CD4-positive, alpha-beta T cell (primary cell): ENCODE measurements at regions of chr4 and their contacts with region 1.

Region 1: GRCh38 chr4:85720735-85721134 is 245.8 kb downstream of the ARHGAP24 start:
- DNase-seq: no peak
- ATAC-seq: no peak
- H3K4me3 ChIP-seq: no peak overlapping the region
- H3K4me3 Mint-ChIP-seq: no peak overlapping the region
- H3K27ac ChIP-seq: no peak overlapping the region
- H3K27ac Mint-ChIP-seq: no peak overlapping the region
- H3K4me1 ChIP-seq: no peaks in the 10 kb centered on the region
- H3K4me1 Mint-ChIP-seq: no peaks in the 10 kb centered on the region
- H3K27me3 ChIP-seq: no peaks in the 10 kb centered on the region
- H3K27me3 Mint-ChIP-seq: no peaks in the 10 kb centered on the region
- CTCF ChIP-seq: no peak

Region 2: GRCh38 chr4:85672116-85672515 is 48.6 kb before region 1 on chr4:
- CTCF ChIA-PET with region 1: no interaction called
- POLR2A ChIA-PET with region 1: no interaction called
- intact Hi-C with region 1: loop called in 1 of 2 experiments (anchors 2 kb)
- DNase-seq: no peak
- ATAC-seq: no peak
- H3K4me3 ChIP-seq: no peak overlapping the region
- H3K4me3 Mint-ChIP-seq: no peak overlapping the region
- H3K27ac ChIP-seq: no peak overlapping the region
- H3K27ac Mint-ChIP-seq: no peak overlapping the region
- H3K4me1 ChIP-seq: no peaks in the 10 kb centered on the region
- H3K4me1 Mint-ChIP-seq: no peaks in the 10 kb centered on the region
- H3K27me3 ChIP-seq: no peaks in the 10 kb centered on the region
- H3K27me3 Mint-ChIP-seq: no peaks in the 10 kb centered on the region
- CTCF ChIP-seq: no peak

Region 3: GRCh38 chr4:86279293-86279960 is 558.7 kb after region 1 on chr4:
- CTCF ChIA-PET with region 1: no interaction called
- POLR2A ChIA-PET with region 1: no interaction called
- intact Hi-C with region 1: no loop called
- DNase-seq: no peak
- ATAC-seq: no peak
- H3K4me3 ChIP-seq: no peak overlapping the region
- H3K4me3 Mint-ChIP-seq: no peak overlapping the region
- H3K27ac ChIP-seq: no peak overlapping the region
- H3K27ac Mint-ChIP-seq: no peak overlapping the region
- H3K4me1 ChIP-seq: no peaks in the 10 kb centered on the region
- H3K4me1 Mint-ChIP-seq: no peaks in the 10 kb centered on the region
- H3K27me3 ChIP-seq: no peaks in the 10 kb centered on the region
- H3K27me3 Mint-ChIP-seq: no peaks in the 10 kb centered on the region
- CTCF ChIP-seq: no peak